Lower leg skin (tissue), 4 donors: ENCODE measurements at regions of chr2 and their contacts with region 1.

Region 1: DNA sequence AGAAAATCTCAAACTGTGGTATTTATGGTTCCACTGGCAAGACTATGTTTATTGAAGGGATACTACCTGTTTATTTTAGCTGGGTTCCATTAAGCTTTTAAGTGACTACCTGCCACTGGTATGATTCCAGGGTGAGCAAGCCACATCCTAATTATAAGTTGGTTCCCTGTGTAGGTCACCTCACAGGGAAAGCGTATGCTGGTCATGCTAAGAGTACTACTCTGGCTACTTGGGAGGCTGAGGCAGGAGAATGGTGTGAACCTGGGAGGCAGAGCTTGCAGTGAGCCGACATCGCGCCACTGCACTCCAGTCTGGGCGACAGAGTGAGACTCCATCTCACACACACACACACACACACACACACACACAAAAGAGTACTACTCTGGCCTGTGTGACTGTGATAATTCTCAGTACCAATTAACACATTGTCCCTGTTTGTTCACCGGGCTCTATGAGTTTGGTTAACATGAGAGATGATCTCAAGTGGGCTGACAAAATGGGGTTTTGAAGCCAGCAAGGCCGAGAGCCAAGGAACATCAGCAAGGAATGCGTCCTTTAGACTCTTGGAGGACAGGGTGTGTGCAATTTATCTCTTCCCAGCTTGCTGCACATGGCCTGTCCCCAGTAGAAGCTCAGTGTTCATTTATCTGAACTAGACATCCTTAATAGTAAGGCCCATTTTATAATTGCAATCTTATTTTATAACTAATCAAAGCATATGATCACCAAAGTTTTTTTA is 15.2 kb upstream of the ITSN2 start:
- DNase-seq: peak; percentile 12 to 22
- H3K4me3 ChIP-seq: no peak overlapping the region
- CTCF ChIP-seq: no peak
- POLR2A ChIP-seq: no peak

Region 2: GRCh38 chr2:24287171-24287570 is 88.3 kb before region 1 on chr2:
- intact Hi-C with region 1: no loop called
- DNase-seq: no peak
- H3K4me3 ChIP-seq: no peak overlapping the region
- CTCF ChIP-seq: no peak
- POLR2A ChIP-seq: no peak

Region 3: GRCh38 chr2:24315669-24316068 is 59.8 kb before region 1 on chr2:
- intact Hi-C with region 1: loop called (anchors 10 kb)
- DNase-seq: no peak
- H3K4me3 ChIP-seq: no peak overlapping the region
- CTCF ChIP-seq: no peak
- POLR2A ChIP-seq: no peak

Region 4: GRCh38 chr2:24568551-24568950 is 193.0 kb after region 1 on chr2:
- intact Hi-C with region 1: no loop called
- DNase-seq: no peak
- H3K4me3 ChIP-seq: no peak overlapping the region
- CTCF ChIP-seq: no peak
- POLR2A ChIP-seq: no peak

Region 5: GRCh38 chr2:24886691-24887304 is 511.3 kb after region 1 on chr2:
- intact Hi-C with region 1: no loop called
- DNase-seq: no peak
- H3K4me3 ChIP-seq: no peak overlapping the region
- CTCF ChIP-seq: no peak
- POLR2A ChIP-seq: no peak